Ovary (tissue), 10 donors: ENCODE measurements at regions of chr4 and their contacts with region 1.

Region 1: DNA sequence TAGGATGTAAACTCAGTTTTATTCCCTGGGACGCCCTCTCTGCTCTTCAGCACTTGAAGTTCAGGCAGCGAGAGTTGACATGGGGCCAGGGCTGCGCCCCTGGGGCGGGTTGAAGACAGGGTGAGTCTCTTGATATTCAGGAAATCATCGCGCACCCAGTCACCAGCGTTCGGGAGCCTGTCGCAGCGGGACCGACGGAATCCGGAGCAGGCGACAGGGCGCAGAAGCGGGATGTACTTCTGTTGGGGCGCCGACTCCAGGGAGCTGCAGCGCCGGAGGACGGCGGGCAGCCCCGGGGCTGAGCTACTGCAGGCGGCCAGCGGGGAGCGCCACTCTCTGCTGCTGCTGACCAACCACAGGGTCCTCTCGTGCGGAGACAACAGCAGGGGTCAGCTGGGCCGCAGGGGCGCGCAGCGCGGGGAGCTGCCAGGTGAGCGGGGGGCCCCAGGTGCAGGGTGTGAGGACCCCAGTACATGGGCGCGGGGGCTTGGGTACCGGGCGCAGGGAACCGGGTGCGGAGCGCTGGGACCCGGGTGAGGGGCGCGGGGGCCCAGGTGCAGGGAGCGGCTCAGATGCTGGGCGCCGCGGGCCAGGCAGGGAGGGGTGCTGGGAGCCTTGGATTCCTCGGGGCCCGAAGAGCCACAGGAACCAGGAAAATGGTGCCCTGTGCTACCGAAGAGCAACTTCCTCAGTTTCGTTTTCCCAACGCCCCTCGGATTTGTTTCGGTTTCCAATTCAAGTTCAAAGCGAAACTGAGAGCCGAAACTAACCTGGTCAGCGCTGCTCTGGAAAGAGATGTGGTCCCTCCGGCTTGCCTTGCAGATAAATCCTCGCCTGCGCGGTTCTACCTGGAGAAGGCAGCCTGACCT is at the start of gene HERC6:
- DNase-seq: peak; percentile 77 to 82 (median 77)
- H3K4me3 ChIP-seq: peak within 1 kb of the TSS; percentile 92
- H3K27ac ChIP-seq: peak within 1 kb of the TSS; percentile 97 to 99
- H3K4me1 ChIP-seq: no peaks in the 10 kb centered on the region
- H3K27me3 ChIP-seq: no peaks in the 10 kb centered on the region
- CTCF ChIP-seq: peak; percentile 81 to 90 (median 82)
- EP300 ChIP-seq: no peak
- POLR2A ChIP-seq: no peak
- total RNA-seq, gene HERC6: 9.4 to 14.9 (median 10.8) TPM

Region 2: DNA sequence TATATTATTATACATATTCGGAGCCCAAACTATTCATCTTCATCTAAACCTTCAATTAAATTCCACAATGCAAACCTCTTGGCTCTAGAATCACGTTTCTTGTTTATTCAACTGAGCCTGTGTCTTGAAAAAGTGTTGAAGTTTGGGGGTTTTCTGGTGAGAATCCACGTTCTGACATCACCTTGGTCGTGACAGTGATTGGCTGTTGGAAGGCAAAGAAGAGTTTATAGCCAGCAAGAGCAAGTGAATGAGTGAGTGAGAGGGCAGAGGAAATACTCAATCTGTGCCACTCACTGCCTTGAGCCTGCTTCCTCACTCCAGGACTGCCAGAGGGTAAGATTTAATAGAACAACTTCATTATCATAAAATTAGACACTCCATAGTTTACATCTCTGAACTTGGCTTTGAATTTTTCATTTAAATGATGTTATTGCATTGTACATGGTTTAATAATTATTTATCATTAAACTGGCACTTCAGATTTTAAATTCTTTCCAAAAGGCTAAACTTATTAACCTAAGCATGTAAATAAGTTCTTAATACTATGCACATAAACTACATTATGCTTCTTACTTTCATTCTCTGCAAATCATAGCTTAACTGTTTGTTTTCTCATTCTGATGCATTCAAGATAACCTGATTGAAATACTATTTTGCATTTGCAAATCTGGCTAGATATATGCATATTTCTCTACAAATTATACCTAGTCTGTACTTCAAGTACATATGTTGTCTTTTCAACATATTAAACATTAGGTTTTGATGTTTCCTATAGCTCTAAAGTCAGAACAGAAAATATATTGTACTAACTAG is 579.4 kb before region 1 on chr4 and contains the start of gene IBSP:
- intact Hi-C with region 1: no loop called
- DNase-seq: no peak
- H3K4me3 ChIP-seq: no peak within 1 kb of the TSS
- H3K27ac ChIP-seq: no peak within 1 kb of the TSS
- H3K4me1 ChIP-seq: no peaks in the 10 kb centered on the region
- H3K27me3 ChIP-seq: no peaks in the 10 kb centered on the region
- CTCF ChIP-seq: no peak
- EP300 ChIP-seq: no peak
- POLR2A ChIP-seq: no peak
- total RNA-seq, gene IBSP: not detected

Region 3: DNA sequence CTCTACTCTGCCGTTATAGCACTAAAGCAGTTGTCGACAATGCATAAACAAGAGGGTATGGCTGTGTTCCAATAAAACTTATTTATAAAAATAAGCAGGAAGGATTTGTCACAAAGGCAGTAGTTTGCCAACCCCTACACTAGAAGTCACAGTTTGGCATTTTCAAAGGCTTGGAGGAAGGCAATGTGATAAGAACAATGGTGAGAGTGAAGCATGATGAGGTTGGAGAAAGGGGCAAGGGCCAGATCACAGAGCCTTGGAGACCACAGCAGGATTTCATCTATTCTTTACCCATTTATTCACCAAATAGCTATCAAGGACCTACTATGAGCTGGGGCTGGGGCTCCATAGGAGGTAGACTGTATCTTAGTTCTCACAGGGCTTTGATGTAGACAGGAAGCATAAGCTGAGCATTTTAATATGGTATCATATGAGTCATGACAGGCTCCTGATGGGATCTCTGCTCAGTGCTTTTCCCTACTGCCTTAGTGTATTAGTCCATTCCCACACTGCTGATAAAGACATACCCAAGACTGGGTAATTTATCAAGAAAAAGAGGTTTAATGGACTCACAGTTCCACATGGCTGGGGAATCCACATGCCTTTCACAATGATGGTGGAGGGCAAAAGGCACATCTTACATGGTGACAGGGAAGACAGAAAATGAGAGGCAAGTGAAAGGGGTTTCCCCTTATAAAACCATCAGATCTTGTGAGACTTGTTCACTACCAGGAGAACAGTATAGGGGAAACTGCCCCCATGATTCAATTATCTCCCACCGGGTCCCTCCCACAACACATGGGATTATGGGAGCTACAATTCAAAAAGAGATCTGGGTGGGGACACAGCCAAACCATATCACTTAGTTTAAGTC is 153.5 kb before region 1 on chr4:
- intact Hi-C with region 1: loop called in 1 of 4 experiments (anchors 10 kb)
- DNase-seq: no peak
- H3K4me3 ChIP-seq: no peak overlapping the region
- H3K27ac ChIP-seq: no peak overlapping the region
- H3K4me1 ChIP-seq: peaks cover 6% of the 10 kb centered on the region
- H3K27me3 ChIP-seq: no peaks in the 10 kb centered on the region
- CTCF ChIP-seq: no peak
- EP300 ChIP-seq: no peak
- POLR2A ChIP-seq: no peak

Region 4: DNA sequence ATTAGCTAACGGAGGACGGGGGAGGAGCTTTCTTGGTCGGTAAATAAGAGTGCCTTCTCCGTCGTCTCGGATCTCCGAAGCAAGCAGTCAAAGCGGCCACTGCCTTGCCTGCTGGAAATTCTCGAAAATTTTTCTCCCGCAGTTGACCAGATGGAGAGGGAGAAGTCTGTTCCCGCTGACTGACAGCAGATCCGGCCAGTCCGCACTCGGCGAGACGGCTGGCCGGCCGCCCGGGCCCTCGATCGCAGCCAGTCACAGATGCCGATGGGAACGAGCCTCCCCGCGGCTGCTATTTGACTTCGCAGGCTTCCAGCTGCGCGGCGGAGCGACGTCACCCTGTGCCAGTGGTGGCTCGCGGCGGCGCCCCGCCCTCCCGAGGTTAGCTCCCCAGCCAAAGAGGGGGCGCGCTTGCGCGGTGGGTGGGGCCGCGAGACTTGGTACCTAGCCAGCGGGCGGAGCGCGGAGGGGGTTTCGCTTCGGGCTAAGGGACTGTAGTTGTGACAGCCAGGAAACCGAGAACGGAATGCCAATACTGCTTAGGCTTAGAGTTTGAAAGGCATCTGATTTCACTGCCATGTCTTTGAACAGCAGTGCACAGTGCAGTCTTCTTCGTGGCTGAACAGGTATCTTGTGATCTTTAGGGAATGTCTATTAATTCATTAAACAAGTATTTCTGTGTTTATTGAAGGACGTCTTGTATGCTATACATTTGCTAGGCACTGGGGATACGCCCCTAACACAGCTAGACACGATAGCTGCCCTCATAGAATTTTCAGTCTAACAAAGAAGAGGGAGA is 94.3 kb before region 1 on chr4 and contains the start of gene PPM1K:
- intact Hi-C with region 1: loop called in 1 of 4 experiments (anchors 10 kb)
- DNase-seq: peak; percentile 100
- H3K4me3 ChIP-seq: peak within 1 kb of the TSS; percentile 91
- H3K27ac ChIP-seq: peak within 1 kb of the TSS; percentile 98 to 100
- H3K4me1 ChIP-seq: peaks cover 18% of the 10 kb centered on the region
- H3K27me3 ChIP-seq: no peaks in the 10 kb centered on the region
- CTCF ChIP-seq: peak in 2 of 3 donors; percentile 33 to 38
- EP300 ChIP-seq: peak; percentile 63
- POLR2A ChIP-seq: peak; percentile 92
- total RNA-seq, gene PPM1K: 34.2 to 111 (median 50.5) TPM

Region 5: GRCh38 chr4:88366460-88366859 is 12.5 kb before region 1 on chr4:
- intact Hi-C with region 1: loop called in 1 of 4 experiments (anchors 1 kb)
- DNase-seq: no peak
- H3K4me3 ChIP-seq: no peak overlapping the region
- H3K27ac ChIP-seq: no peak overlapping the region
- H3K4me1 ChIP-seq: no peaks in the 10 kb centered on the region
- H3K27me3 ChIP-seq: no peaks in the 10 kb centered on the region
- CTCF ChIP-seq: no peak
- EP300 ChIP-seq: no peak
- POLR2A ChIP-seq: no peak

Region 6: DNA sequence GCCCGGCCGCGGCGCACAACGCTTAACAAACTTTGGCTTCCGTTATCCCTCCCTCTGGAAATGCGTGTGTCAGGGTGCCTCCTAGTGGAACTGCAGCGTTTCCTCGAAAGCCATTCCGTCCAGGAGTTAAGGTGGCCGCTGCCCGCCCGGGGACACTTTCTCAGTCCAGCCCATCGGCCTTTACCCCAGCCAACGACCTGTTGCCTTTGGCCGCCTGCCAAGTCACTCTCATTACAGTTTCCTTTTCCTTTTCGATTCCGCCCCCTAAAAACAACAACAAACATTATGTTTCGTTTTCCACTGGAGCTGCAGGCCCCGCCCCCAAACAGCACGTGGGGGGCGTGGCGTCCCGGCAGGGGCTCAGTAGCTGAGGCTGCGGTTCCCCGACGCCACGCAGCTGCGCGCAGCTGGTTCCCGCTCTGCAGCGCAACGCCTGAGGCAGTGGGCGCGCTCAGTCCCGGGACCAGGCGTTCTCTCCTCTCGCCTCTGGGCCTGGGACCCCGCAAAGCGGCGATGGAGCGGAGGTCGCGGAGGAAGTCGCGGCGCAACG is 77.9 kb after region 1 on chr4 and contains the start of gene HERC5:
- intact Hi-C with region 1: loop called in 2 of 4 experiments (anchors 10 kb)
- DNase-seq: peak; percentile 93 to 97 (median 95)
- H3K4me3 ChIP-seq: peak within 1 kb of the TSS; percentile 92
- H3K27ac ChIP-seq: peak within 1 kb of the TSS; percentile 89 to 92
- H3K4me1 ChIP-seq: no peaks in the 10 kb centered on the region
- H3K27me3 ChIP-seq: no peaks in the 10 kb centered on the region
- CTCF ChIP-seq: peak; percentile 61 to 84 (median 83)
- EP300 ChIP-seq: peak; percentile 56
- POLR2A ChIP-seq: peak; percentile 85
- total RNA-seq, gene HERC5: 10.5 to 20.9 (median 18.6) TPM

Region 7: DNA sequence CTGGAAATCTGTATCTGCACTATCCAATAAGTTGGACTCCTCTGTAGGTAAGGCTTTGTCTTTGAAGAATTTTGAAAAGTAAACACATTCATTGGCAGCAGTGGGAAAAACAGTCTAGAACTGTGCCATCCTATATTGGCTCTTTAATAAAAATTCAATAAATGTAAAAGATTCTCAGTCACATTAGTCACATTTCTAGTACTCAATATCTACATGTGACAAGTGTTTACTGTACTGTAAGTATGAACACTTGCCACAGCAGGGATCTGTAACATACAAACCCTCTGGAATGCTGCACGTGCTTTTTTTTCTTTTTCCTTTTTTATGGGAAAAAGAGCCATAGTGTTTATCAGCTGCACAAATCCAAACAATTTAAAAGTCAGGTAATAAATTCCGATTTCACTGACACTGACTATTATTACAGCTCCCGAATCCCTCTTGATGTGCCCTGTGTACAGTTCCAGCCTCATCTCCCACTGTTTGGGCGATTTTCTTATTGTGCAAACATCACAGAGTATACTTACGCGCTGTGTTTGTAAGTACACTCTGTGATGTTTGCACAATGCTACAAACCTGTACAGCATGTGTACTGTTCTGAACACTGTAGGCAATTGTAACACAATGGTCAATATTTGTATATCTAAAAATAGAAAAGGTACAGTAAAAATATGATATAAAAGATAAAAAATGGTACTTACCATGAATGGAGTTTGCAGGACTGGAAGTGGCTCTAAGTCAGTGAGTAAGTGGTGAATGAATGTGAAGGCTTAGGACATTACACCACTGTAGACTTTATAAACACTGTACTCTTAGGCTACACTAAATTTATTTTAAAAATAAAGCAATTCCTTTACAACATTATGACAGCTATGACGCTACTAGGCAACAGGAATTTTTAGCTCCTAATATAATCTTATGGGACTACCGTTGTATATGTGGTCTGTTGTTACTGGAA is 135.9 kb after region 1 on chr4:
- intact Hi-C with region 1: loop called in 1 of 4 experiments (anchors 10 kb)
- DNase-seq: no peak
- H3K4me3 ChIP-seq: no peak overlapping the region
- H3K27ac ChIP-seq: no peak overlapping the region
- H3K4me1 ChIP-seq: no peaks in the 10 kb centered on the region
- H3K27me3 ChIP-seq: no peaks in the 10 kb centered on the region
- CTCF ChIP-seq: no peak
- EP300 ChIP-seq: no peak
- POLR2A ChIP-seq: no peak